ENCODE measurements at regions of chr12 and their contacts with region 1.

Region 1: DNA sequence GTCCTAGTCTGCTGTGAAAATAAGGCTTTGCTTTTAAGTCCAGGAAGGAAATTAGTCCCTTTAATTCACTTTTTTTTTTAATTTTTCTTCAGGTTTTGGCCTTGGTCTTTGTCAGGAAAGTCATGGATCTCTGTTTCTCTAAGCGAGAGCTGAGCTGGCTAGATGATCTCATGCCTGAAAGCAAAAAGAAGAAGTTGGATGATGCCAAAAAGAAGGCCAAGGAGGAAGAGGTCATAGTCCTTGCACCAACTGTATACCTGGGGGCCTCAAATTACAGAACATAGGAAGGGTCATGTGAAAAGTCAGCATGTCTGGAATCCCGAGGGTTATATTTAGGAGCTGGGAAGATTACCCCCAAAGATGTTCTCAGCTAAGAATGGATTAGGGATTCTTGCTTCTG is 72.3 kb downstream of the SLC4A8 start:
- DNase-seq: no peak
- ATAC-seq: no peak
- H3K4me3 ChIP-seq: no peak overlapping the region
- H3K27ac ChIP-seq: no peak overlapping the region
- H3K4me1 ChIP-seq: no peaks in the 10 kb centered on the region
- H3K27me3 ChIP-seq: no peaks in the 10 kb centered on the region
- CTCF ChIP-seq: no peak

Region 2: DNA sequence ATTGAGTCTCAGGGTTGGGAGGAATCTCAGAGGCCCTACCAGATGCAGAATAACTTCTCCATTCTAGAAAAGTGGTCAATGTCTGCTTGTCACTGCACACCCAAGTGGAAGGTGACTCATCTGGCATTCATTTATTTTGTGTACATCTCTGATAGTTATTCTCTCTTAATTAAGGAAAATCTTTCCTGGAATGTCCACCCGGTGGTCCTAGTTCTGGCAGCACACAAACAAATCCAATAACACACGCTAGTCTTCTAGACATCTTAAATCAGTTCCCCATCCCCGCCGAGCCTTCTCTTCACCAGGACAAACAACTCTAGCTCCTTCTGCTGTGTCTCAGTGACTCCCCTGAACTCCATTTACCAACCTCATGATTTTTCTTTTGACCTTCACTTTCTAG is 44.1 kb after region 1 on chr12:
- CTCF ChIA-PET with region 1: no interaction called
- POLR2A ChIA-PET with region 1: interaction called, 10 read pairs
- in situ Hi-C with region 1: no loop called
- intact Hi-C with region 1: no loop called
- DNase-seq: no peak
- ATAC-seq: no peak
- H3K4me3 ChIP-seq: no peak overlapping the region
- H3K27ac ChIP-seq: no peak overlapping the region
- H3K4me1 ChIP-seq: peaks cover 3% of the 10 kb centered on the region; the same call in 1 of the 2 replicates
- H3K27me3 ChIP-seq: no peaks in the 10 kb centered on the region; the same call in 1 of the 2 replicates
- CTCF ChIP-seq: no peak